Gastrocnemius medialis (tissue), 4 donors: ENCODE measurements at regions of chr11 and their contacts with region 1.

Region 1: GRCh38 chr11:17722000-17722643 is 2.8 kb downstream of the MYOD1 start:
- DNase-seq: peak; percentile 54 to 76
- ATAC-seq: peak in 1 of 2 donors; percentile 21
- H3K4me3 ChIP-seq: peak overlapping the region; percentile 61 to 69 (median 65)
- H3K27ac ChIP-seq: peak overlapping the region; percentile 93 to 99 (median 96)
- H3K4me1 ChIP-seq: peaks cover 8 to 21% of the 10 kb centered on the region in 2 donors
- H3K27me3 ChIP-seq: no peaks in the 10 kb centered on the region
- CTCF ChIP-seq: peak; percentile 52 to 69 (median 57)
- POLR2A ChIP-seq: no peak

Region 2: DNA sequence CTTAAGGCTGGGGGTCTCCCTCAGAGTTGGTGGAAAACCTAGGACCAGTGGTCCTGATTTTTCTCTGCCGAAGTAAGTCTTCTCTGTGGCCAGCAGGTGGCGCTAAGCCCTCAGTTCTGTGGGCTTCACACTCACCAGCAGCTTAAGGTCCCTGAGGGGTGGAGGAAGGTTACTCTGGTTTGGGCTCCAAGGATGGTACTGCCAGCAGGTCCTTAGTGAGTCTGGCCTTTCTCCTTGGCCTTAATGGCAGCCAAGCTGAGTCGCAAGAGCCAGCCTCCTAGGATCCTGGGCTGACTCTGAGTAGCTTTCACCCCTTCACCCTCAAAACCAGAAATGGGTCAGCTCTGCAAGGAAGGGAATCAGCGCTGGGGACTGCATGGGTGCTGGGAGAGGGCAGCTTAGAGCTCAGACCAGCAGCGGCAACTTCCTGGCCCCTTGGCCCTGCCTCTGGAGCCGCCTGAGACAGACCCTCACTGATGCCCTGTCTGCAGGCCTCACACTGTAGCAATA is 338.1 kb before region 1 on chr11:
- in situ Hi-C with region 1: loop called in 1 of 4 experiments (anchors 25 kb)
- intact Hi-C with region 1: loop called (anchors 2 kb)
- DNase-seq: peak; percentile 71 to 88
- ATAC-seq: peak; percentile 35 to 45
- H3K4me3 ChIP-seq: peak overlapping the region in 3 of 4 donors; percentile 55 to 72 (median 68)
- H3K27ac ChIP-seq: peak overlapping the region; percentile 90 to 98 (median 97)
- H3K4me1 ChIP-seq: peaks cover 45% of the 10 kb centered on the region in 2 donors
- H3K27me3 ChIP-seq: no peaks in the 10 kb centered on the region
- CTCF ChIP-seq: peak; percentile 92 to 97 (median 94)
- POLR2A ChIP-seq: no peak

Region 3: DNA sequence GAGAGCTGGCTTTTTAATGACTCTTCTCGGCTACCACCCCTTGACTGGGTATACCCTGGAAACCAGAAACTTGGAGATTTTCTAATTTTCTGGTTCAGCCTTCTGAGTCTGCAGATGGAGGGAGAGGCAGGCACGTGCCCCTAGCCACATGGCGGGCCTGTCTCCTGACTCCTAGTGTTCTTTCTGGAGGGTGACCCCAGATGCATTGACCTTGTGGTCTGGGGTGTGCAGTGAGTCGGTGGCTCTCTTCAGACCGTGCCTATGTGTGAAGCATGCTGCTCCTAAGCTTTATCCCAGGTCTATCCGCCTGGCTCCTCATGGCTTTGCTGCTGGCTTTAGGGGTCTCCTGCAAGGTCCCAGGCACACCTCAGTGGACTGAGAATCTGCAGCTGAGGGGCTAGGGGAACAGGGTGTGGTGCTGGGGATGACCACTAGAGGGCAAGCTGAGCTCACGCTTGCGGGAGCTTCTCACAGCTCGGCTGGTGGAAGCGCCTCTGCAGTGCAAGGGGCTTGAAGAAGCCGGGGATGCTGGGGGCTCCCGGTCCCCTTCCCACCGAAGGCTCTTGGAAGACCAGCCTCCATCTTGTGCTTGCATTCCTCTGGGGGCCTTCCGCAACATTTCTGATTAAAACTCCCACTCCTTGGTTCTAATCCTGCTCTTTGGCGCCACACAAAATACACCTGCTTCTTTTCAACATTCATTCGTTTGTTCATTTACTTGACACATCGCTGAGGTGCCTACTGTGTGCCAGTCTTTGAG is 123.2 kb before region 1 on chr11:
- in situ Hi-C with region 1: loop called in 3 of 4 experiments (anchors 5 kb)
- intact Hi-C with region 1: loop called (anchors 1 kb)
- DNase-seq: peak; percentile 54 to 62
- ATAC-seq: peak; percentile 87 to 90
- H3K4me3 ChIP-seq: no peak overlapping the region
- H3K27ac ChIP-seq: no peak overlapping the region
- H3K4me1 ChIP-seq: peaks cover 0 to 3% of the 10 kb centered on the region in 2 donors
- H3K27me3 ChIP-seq: no peaks in the 10 kb centered on the region
- CTCF ChIP-seq: peak; percentile 90 to 97 (median 96)
- POLR2A ChIP-seq: no peak

Region 4: DNA sequence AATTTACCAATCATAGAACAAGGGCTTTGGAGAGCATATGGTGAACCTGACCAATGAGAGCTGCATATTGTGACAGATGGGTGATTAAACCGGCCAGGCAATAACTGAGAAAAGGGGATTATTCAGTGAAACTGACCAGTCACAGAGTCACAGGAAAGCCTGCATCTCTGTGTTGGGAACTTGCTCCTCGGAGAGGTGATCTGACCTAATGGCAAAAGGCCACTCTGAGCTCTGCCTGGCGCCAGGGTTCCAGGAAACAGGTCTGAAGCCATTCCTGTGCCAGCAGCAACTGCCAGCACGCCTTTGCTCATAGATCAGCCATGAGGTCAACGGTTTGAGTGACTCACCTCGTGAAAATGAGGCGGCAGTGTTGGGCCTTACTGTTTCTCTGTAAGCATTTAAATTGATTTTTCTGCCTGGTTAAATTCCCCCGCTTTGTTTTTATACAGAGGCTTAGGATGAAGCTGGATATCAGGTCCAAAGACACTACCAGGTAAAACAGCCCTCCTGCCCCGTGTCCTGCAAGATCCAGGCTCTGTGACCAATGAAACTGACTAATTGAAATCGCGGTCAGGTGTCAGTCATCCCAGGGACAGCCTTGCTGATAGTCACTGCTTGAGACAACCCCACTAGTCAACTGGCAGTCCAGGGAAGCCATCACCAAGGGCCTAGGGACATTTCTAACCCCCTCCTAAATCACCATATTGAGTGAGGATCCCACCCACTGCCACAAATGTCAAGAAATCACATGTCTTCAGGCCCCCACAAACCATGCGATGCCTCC is 38.6 kb before region 1 on chr11:
- in situ Hi-C with region 1: no loop called
- intact Hi-C with region 1: loop called (anchors 1 kb)
- DNase-seq: peak; percentile 58 to 87
- ATAC-seq: peak; percentile 69 to 71
- H3K4me3 ChIP-seq: no peak overlapping the region
- H3K27ac ChIP-seq: peak overlapping the region; percentile 80 to 87 (median 82)
- H3K4me1 ChIP-seq: peaks cover 56 to 61% of the 10 kb centered on the region in 2 donors
- H3K27me3 ChIP-seq: no peaks in the 10 kb centered on the region
- CTCF ChIP-seq: no peak
- POLR2A ChIP-seq: peak in 1 of 2 donors; percentile 26

Region 5: DNA sequence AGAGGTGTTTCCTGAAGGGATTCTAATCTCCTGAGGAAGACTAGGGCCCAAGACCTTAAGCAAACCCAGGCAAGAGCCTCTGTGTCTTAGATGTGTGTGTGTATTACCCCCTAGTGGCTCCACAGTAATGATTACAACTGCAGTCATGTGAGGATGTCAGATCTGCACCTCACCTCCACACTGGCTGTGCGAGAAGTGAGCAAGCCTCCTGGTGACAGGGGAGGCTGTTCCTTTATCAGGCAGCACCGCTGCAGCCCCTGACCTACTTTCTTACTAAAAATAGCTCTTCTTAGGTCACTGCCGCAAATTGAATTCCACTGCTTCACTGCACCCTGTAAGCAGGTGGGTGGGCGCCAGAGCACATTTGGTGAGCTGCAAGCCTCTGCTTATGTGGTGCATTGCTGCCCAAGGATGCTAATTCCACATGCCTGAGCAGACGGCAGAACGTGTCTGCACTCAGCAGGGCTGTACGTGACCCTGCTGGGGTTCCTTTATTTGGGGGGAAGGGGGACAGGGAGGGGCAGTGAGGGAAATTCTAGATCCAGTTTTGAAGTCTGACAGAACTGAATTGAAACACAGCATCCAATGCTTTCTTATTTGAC is 124.8 kb after region 1 on chr11:
- in situ Hi-C with region 1: loop called in 1 of 4 experiments (anchors 10 kb)
- intact Hi-C with region 1: no loop called
- DNase-seq: peak; percentile 42 to 73
- ATAC-seq: peak; percentile 86 to 88
- H3K4me3 ChIP-seq: no peak overlapping the region
- H3K27ac ChIP-seq: peak overlapping the region; percentile 44 to 62 (median 51)
- H3K4me1 ChIP-seq: peaks cover 29 to 38% of the 10 kb centered on the region in 2 donors
- H3K27me3 ChIP-seq: no peaks in the 10 kb centered on the region
- CTCF ChIP-seq: peak; percentile 40 to 68 (median 61)
- POLR2A ChIP-seq: peak in 1 of 2 donors; percentile 30

Region 6: DNA sequence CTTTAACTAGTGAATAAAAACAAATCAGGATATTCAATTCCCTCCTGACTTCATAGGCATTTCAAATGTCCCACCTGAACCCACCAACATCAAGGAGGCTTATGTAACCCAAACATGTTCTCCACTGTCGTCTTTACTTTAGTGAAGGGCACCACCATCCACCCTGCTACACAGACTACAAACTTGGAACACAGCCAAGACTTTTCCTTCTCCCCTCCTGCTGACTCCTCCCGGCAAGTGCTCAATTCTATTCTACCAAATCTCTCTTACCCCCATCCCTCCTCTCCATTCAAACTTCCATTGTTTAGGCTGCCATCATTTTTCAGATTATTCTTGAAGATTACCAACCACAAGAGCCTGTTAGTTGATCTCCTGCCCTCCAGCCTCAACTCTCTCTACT is 359.4 kb after region 1 on chr11:
- in situ Hi-C with region 1: no loop called
- intact Hi-C with region 1: no loop called
- DNase-seq: no peak
- ATAC-seq: no peak
- H3K4me3 ChIP-seq: no peak overlapping the region
- H3K27ac ChIP-seq: no peak overlapping the region
- H3K4me1 ChIP-seq: no peaks in the 10 kb centered on the region
- H3K27me3 ChIP-seq: no peaks in the 10 kb centered on the region
- CTCF ChIP-seq: no peak
- POLR2A ChIP-seq: no peak

Region 7: DNA sequence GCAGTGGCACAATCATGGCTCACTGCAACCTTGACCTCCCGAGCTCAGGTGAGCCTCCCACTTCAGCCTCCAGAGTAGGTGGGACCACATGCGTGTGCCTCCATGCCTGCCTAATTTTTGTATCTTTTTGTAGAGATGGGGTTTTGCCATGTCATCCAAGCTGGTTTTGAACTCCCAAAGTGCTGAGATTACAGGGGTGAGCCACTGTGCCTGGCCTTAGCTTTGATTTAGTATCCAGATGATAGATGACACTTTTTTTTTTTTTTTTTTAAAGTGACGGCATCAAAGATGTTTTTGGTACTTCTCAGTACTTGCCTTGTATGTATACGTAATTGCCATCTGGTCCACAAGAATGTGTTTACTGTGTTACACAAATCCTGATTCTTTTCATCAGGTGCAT is 756.9 kb after region 1 on chr11:
- in situ Hi-C with region 1: no loop called
- intact Hi-C with region 1: no loop called
- DNase-seq: no peak
- ATAC-seq: no peak
- H3K4me3 ChIP-seq: no peak overlapping the region
- H3K27ac ChIP-seq: no peak overlapping the region
- H3K4me1 ChIP-seq: no peaks in the 10 kb centered on the region
- H3K27me3 ChIP-seq: no peaks in the 10 kb centered on the region
- CTCF ChIP-seq: no peak
- POLR2A ChIP-seq: no peak